H1 (cell line): ENCODE measurements at regions of chr2 and their contacts with region 1.

Region 1: DNA sequence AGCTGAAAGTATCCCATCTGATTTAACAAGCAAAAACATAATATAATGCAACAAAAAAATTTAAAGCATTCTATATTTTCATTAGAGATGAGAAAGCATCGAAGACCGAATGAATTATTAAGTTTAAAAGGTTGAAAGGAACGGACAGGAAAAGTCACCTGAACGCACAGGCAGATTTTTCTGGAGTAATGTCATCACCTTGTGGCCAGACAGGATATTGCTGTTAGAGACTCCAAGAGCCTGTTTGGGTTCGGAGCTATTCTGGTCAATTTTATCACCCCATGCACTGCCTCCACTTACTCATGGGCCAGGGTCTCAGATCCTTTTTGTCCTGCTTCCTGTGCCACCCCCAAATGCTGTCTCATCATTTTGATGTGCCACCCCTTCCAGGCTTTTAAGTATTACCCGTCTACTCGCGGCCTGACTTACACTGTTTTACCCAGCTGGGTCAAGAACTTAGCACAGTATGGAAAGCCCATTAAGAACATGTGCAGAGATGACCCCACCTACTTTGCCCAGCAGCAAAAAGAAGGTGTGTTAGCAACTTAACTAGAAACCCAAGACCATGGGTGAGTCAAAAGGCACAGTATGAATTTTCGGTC is 27.3 kb downstream of the GKN2 start:
- DNase-seq: no peak
- H3K4me3 ChIP-seq: no peak overlapping the region
- H3K27ac ChIP-seq: no peak overlapping the region
- H3K4me1 ChIP-seq: no peaks in the 10 kb centered on the region; a peak in 1 of 7 replicates
- H3K27me3 ChIP-seq: no peaks in the 10 kb centered on the region
- CTCF ChIP-seq: peak in 2 of 3 experiments; percentile 86 to 88; a peak in 3 of 4 replicates
- EP300 ChIP-seq: no peak
- POLR2A ChIP-seq: no peak
- RAD21 ChIP-seq: peak; percentile 95 to 96

Region 2: GRCh38 chr2:68709421-68709911 is 215.9 kb before region 1 on chr2:
- CTCF ChIA-PET with region 1: interaction called, 28 read pairs
- POLR2A ChIA-PET with region 1: no interaction called
- DNase-seq: peak in 1 of 2 experiments; percentile 52
- H3K4me3 ChIP-seq: no peak overlapping the region
- H3K27ac ChIP-seq: no peak overlapping the region
- H3K4me1 ChIP-seq: peaks cover 0 to 2% (median 1%) of the 10 kb centered on the region in 4 experiments; a peak in 2 of 7 replicates
- H3K27me3 ChIP-seq: no peaks in the 10 kb centered on the region
- CTCF ChIP-seq: peak; percentile 36 to 73 (median 67)
- EP300 ChIP-seq: no peak
- POLR2A ChIP-seq: no peak
- RAD21 ChIP-seq: peak; percentile 54 to 69

Region 3: GRCh38 chr2:68721482-68722101 is 203.8 kb before region 1 on chr2:
- CTCF ChIA-PET with region 1: interaction called, 21 read pairs
- POLR2A ChIA-PET with region 1: no interaction called
- DNase-seq: no peak
- H3K4me3 ChIP-seq: no peak overlapping the region
- H3K27ac ChIP-seq: no peak overlapping the region
- H3K4me1 ChIP-seq: no peaks in the 10 kb centered on the region
- H3K27me3 ChIP-seq: no peaks in the 10 kb centered on the region
- CTCF ChIP-seq: no peak
- EP300 ChIP-seq: no peak
- POLR2A ChIP-seq: no peak
- RAD21 ChIP-seq: no peak

Region 4: DNA sequence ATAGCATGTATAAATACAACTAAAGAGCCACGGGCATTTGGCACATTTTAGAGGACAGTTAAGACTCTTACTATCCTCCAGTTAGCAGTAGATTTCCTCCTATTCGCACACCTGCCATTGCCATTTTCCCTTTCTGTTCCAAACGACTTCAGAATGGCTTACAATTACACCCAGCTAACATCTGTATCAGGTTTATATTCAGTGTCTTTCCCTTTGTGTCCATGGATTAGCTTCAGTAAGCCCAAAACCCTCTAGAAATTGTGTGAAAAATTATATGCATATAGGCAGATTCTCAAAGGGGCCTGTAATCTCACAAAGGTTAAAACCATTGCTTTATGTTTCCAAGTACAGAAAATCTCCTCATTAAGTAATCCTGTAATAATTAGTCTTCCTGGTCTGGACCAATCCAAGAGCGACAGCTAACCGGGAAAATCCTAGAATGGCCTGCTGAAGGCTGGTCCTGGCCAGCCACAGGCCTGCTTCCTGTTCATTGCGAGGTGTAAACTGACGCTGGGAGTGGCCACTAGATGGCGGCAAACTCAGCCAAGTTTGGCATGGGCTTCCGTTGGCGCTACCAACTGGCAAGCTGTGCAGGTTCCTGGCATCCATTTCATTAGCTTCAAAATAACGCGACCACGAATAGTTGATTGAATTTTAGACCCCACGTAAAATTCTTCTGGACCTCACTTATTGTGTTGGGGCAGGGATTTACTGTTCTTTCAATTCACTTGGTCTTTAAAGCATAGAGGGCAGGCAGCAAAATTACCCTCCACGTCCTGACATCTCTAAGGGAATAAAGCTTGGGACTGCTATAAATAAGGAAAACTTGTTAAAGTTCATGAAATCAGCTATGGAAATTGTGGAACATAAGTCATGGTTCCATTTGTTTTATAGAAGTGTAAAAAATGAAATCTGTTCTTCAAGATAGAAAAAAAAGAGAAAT is 173.7 kb before region 1 on chr2:
- CTCF ChIA-PET with region 1: interaction called, 44 read pairs
- POLR2A ChIA-PET with region 1: no interaction called
- DNase-seq: peak; percentile 69 to 95
- H3K4me3 ChIP-seq: no peak overlapping the region
- H3K27ac ChIP-seq: no peak overlapping the region
- H3K4me1 ChIP-seq: peaks cover 0 to 3% (median 0%) of the 10 kb centered on the region in 4 experiments; a peak in 1 of 7 replicates
- H3K27me3 ChIP-seq: no peaks in the 10 kb centered on the region
- CTCF ChIP-seq: peak; percentile 93 to 97 (median 96)
- EP300 ChIP-seq: 0 out of 3 replicates have a peak, but pooled peaks of 1 of the 2 experiments have one; percentile 14
- POLR2A ChIP-seq: no peak
- RAD21 ChIP-seq: peak; percentile 87 to 94

Region 5: DNA sequence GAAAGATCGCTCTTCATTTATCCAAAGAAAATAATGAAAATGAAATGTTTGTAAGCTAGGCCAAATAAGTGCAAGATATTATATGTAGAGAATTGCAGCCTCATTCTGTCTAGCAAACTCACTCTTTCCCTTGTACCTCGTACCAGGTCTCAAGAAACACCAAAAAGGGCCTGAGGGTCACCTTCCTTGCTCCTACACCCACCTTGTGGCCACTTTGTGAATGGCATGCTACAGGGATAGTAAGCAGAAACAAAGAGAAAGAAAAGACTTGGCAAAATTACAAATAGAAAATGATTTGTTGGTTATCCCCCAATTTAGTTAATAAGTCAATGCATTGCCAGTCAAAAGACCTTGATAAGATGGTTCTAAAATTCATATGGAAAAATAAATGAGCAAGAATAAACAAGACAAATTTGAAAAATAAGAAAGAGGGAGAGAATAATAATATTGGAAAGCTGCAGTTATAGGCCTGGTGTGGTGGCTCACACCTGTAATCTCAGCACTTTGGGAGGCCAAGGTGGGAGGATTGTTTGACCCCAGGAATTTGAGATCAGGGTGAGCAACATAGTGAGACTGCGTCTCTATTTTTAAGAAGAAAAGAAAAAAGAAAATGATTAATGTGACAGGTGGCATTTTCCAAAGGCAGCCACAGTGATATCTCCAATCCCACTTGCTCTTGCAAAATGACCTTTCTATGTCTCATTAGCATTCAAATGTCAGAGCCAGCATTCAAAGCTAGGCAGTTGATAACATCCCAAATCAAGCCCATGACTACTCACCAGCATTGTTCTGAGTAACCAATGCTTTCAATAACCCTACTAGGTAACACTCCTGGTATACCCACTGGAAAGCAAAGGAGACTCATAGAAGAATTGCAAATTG is 15.4 kb before region 1 on chr2:
- CTCF ChIA-PET with region 1: interaction called, 54 read pairs
- POLR2A ChIA-PET with region 1: interaction called, 3 read pairs
- DNase-seq: peak in 1 of 2 experiments; percentile 80
- H3K4me3 ChIP-seq: no peak overlapping the region
- H3K27ac ChIP-seq: no peak overlapping the region
- H3K4me1 ChIP-seq: peaks cover 0 to 7% (median 4%) of the 10 kb centered on the region in 4 experiments; a peak in 4 of 7 replicates
- H3K27me3 ChIP-seq: no peaks in the 10 kb centered on the region
- CTCF ChIP-seq: peak; percentile 54 to 77 (median 62)
- EP300 ChIP-seq: no peak
- POLR2A ChIP-seq: no peak
- RAD21 ChIP-seq: peak; percentile 77 to 78